ENCODE measurements at regions of chr2 and their contacts with region 1.

Region 1: GRCh38 chr2:74919827-74920226 is 38.6 kb upstream of the POLE4 start:
- DNase-seq: peak; percentile 81
- ATAC-seq: peak; percentile 74

Region 2: DNA sequence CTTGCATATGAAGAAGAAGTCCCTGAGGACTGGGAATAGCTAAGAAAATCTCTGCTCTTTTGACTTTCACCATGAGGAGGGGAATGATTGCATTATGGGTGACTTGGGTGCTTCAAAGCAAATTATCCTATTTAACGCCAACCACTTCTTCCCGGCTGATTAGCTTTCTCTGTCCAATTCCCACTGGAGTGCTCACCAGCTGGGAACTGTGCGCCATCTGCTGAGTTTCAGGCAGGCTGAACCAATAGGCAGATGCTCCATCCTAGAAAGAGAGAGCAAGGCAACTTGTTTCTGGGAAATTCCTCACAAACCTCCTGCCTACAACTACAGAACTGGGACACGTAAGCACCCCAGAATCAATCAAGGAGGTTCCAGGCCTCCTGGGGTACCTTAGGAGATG is 88.0 kb after region 1 on chr2:
- intact Hi-C with region 1: no loop called
- DNase-seq: no peak
- ATAC-seq: no peak

Region 3: DNA sequence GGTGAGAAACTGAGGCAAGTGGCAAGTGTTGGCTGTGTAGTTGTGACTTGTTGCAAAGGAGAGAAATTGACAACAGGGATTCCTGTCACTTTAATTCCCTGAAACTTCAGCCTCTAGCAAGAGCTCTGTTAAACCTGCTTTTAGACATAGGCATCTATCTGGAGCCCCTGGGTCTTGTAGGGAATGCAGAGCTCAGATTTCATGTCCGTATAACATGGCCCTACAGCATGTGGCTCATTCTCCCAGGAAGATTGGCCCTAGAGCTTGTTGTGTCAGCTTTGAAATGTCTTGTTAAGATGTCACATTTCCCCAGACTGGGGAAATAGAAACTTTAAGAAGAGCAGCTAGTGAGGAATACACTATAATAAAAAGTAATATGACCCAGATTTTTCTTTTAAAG is 154.4 kb after region 1 on chr2:
- intact Hi-C with region 1: loop called (anchors 5 kb)
- DNase-seq: no peak
- ATAC-seq: no peak

Region 4: GRCh38 chr2:75403991-75404428 is 484.2 kb after region 1 on chr2:
- intact Hi-C with region 1: loop called (anchors 5 kb)
- DNase-seq: no peak
- ATAC-seq: peak; percentile 64

Region 5: DNA sequence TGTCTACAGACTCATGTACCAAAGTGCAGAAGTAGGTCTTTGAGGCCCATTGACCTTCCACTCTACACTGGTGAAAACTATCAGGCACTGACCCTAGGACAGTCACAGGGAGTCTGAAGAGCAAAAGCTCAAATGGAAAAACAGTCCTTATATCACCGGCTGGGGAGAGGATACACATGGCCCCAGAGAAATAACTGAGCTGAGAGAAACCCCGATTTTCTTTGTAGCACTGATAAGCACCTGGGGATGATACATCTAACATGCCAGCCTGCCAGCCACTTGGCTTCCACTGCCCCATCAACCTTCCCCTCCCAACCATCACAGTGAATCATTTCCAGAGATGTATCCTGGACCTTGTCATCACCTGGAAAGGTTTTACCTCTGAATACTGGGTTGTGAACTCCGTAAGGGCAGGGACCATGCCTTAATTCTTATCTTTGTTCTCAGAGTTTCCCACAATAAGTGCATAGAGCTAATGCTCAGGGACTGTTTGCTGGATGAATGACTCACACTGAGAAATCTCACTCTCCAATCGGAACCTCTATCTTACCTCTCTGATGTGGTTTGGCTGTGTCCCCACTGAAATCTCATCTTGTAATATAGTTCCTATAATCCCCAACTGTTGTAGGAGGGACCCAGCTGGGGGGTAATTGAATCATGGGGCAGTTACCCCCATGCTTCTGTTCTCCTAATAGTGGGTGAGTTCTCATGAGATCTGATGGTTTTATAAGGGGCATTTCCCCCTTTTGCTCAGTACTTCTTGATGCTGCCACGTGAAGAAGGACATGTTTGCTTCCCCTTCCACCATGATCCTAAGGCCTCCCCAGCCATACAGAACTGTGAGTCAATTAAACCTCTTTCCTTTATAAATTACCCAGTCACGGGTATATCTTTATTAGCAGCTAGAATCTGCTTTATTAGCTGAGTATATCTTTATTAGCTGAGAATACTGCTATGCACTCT is 603.8 kb after region 1 on chr2:
- intact Hi-C with region 1: no loop called
- DNase-seq: no peak
- ATAC-seq: no peak

Region 6: GRCh38 chr2:75619956-75620740 is 700.3 kb after region 1 on chr2:
- intact Hi-C with region 1: loop called (anchors 10 kb)
- DNase-seq: no peak
- ATAC-seq: no peak

Measured in Right ventricle myocardium superior (tissue), 1 donor.